HEK293T (cell line): ENCODE measurements at regions of chr1 and their contacts with region 1.

Region 1: GRCh38 chr1:145845514-145846161 is at the start of gene NUDT17:
- DNase-seq: peak; percentile 94

Region 2: DNA sequence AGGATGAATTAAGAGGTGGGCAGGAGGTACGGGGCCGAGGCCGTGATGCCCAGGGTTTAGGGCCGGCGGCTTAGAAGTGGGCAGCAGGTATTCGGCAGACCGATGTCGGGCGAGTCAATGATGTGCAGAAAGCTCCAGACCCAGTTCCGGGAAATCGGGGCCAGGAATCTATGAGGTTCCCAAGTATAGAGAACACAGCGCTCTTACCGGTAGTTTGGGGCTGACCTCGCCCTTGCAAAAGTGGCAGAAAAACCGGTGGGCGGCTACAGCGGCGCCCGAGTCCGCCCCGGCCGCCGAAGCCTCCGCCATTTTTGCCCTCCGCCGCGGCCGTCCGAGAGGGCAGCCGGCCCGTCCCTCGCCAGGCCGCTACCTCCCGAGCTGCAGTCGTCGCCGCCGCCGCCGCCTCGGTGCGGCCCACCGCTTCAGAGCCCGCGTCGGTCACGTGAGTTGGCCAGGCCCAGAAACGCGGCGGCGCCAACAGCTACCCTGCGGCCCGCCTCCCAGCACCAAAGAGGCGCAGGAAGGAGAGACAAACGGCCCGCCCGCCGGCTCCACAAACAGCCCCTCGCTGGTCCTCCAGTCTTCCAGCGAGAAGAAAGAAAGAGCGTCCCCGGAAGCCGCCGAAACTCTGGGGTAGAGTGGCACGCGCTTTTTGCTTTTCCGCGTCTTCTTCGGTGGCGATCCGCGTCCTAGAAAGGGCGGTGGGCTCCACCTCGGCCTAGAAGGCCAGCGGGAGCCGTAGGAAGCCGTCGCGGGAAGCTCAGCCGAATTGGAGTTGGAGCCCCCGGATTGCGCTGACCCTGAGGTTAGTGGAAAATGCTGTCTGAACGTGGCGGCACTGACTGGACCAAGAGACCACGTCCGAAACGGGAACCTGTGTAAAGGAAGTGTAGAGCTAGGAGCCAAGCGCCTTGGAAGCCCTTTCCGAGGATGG is 21.8 kb before region 1 on chr1 and contains the starts of genes POLR3C and RNF115:
- CTCF ChIA-PET with region 1: interaction called, 17 read pairs
- POLR2A ChIA-PET with region 1: interaction called, 27 read pairs
- DNase-seq: peak; percentile 91

Region 3: DNA sequence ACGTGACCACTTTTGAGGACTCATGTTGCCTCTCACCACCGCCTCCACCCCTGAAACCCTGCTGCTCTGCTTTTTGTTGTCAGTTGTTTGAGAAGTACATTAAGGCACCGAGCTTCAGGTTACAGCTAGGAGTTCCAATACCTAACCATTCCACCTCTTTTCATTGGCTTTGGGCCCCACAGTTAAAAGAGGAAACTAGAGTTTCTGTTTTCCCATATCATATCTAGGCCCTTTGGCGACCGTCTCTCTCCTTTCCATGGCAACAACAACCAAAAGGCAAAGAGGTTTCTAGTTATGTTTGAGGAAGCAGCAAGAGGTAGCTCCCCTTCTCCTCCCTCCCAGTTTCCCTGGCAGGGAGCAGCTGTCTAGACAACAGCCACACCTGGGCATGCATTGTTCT is 34.1 kb after region 1 on chr1:
- CTCF ChIA-PET with region 1: interaction called, 11 read pairs
- POLR2A ChIA-PET with region 1: no interaction called
- DNase-seq: no peak